WTC11 (cell line): ENCODE measurements at regions of chr3 and their contacts with region 1.

Region 1: DNA sequence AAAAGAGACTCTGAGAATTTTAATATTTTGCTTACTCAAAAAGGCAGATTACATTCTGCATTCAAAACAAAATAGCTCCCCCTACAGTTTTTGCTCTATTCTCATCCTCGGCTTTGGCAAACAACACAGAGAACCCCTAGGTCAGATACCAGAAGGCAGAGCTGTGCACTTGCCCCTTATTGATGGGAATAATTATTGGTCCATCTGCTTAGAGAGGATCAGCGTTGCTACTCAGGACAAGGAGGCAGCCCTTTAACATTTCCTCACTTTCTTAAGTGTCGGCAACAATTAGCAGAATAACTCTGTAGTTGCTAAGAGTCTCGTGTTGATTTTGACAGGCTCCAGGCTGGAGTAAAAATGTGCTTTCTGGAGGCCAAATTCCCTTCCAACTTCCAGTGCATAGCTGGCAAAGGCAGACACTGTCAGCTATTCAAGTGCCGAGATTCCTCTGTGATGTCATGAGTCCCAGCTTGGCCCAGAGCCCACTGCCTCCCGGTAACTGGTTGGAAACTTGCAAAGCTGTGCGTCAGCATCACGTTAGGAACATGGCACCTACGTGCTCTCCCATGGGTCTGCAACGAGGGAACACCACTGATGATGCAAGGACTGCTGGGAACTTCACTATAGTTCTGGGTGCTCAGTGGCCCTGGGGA is 482.7 kb upstream of the ADAMTS9 start:
- DNase-seq: no peak
- ATAC-seq: peak; percentile 81
- H3K4me3 Mint-ChIP-seq: no peak overlapping the region
- H3K27ac Mint-ChIP-seq: peak overlapping the region; percentile 60; the same call in 1 of the 2 replicates
- H3K4me1 Mint-ChIP-seq: peaks cover 6% of the 10 kb centered on the region
- H3K27me3 Mint-ChIP-seq: peaks cover 3% of the 10 kb centered on the region
- CTCF ChIP-seq: no peak; the same call in 1 of the 2 replicates

Region 2: DNA sequence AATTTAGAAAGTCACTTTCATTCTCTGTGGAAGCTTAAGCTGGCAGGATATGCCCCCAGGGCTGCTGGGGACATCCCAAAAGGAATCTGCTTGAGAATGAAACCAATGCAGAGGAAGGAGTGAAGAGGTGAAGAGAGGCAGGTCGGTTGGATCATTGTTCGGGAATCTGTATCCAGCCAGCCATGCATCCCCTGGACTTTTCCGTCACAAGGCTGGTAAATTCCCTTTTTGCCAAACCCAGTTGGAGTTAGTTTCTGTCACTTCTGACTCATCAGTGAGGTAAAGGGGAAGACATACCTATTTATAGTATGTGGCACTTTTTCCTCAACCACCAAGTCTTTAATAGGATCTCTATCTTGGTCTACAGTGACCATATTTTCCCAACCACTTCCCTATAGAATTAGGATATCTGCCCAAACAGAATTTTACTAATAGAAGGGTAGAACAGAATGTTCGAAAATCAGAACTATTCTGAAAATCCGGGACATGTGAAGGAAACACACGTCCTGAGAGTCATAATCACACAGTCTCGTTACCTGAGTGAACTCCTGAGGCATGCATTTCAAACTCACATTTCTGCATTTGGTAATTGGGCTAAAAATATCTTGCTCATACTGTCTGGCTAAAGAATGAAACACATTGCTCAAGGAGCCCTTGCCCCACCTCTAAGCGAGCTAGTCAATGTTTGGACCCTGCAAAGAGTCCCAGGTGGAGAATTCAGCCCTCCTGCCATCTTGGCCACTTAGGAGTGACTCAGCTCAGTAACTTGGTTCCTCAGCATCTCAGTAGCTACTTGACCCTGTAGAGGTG is 193.0 kb before region 1 on chr3:
- CTCF ChIA-PET with region 1: no interaction called
- POLR2A ChIA-PET with region 1: no interaction called
- DNase-seq: no peak
- ATAC-seq: peak; percentile 32; the same call in 1 of the 2 replicates
- H3K4me3 Mint-ChIP-seq: no peak overlapping the region
- H3K27ac Mint-ChIP-seq: no peak overlapping the region
- H3K4me1 Mint-ChIP-seq: peaks cover 12% of the 10 kb centered on the region
- H3K27me3 Mint-ChIP-seq: no peaks in the 10 kb centered on the region
- CTCF ChIP-seq: no peak

Region 3: GRCh38 chr3:65146179-65146578 is 24.3 kb before region 1 on chr3:
- CTCF ChIA-PET with region 1: interaction called, 10 read pairs
- POLR2A ChIA-PET with region 1: no interaction called
- DNase-seq: peak; percentile 56
- ATAC-seq: peak; percentile 78
- H3K4me3 Mint-ChIP-seq: peak overlapping the region; percentile 19
- H3K27ac Mint-ChIP-seq: peak overlapping the region; percentile 99
- H3K4me1 Mint-ChIP-seq: peaks cover 61% of the 10 kb centered on the region
- H3K27me3 Mint-ChIP-seq: peaks cover 11% of the 10 kb centered on the region
- CTCF ChIP-seq: no peak

Region 4: GRCh38 chr3:65153850-65154512 is 16.5 kb before region 1 on chr3:
- CTCF ChIA-PET with region 1: interaction called, 10 read pairs
- POLR2A ChIA-PET with region 1: no interaction called
- DNase-seq: no peak
- ATAC-seq: peak; percentile 80
- H3K4me3 Mint-ChIP-seq: peak overlapping the region; percentile 22; the same call in 1 of the 2 replicates
- H3K27ac Mint-ChIP-seq: peak overlapping the region; percentile 78; the same call in 1 of the 2 replicates
- H3K4me1 Mint-ChIP-seq: peaks cover 48% of the 10 kb centered on the region
- H3K27me3 Mint-ChIP-seq: peaks cover 22% of the 10 kb centered on the region
- CTCF ChIP-seq: no peak

Region 5: DNA sequence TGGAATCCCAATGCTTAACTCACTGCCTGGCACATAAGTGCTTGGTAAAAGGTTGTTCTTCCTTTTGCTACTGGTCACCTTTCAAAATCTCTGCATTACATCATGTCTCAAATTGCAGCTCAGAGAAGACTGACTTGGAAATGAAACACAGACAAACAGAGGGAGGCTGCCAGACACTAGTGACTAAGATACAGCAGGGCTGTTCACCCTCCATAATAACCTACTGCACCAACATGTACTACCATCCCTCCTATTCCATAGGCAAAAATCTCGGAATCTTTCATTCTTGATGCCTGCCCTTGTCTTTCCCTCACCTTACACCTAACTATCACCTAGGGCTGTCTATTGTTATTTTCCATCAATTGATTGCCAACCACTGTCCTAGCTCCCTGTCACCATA is 19.6 kb after region 1 on chr3:
- CTCF ChIA-PET with region 1: interaction called, 14 read pairs
- POLR2A ChIA-PET with region 1: no interaction called
- DNase-seq: no peak
- ATAC-seq: no peak
- H3K4me3 Mint-ChIP-seq: no peak overlapping the region
- H3K27ac Mint-ChIP-seq: no peak overlapping the region
- H3K4me1 Mint-ChIP-seq: no peaks in the 10 kb centered on the region
- H3K27me3 Mint-ChIP-seq: no peaks in the 10 kb centered on the region; the same call in 1 of the 2 replicates
- CTCF ChIP-seq: no peak